ENCODE measurements at regions of chr21 and their contacts with region 1.

Region 1: GRCh38 chr21:17387030-17387617 is 125.7 kb upstream of the CXADR start:
- DNase-seq: peak in 3 of 6 donors; percentile 11 to 43 (median 28)
- ATAC-seq: peak; percentile 64 to 95 (median 88)
- H3K4me3 ChIP-seq: no peak overlapping the region
- H3K27ac ChIP-seq: no peak overlapping the region
- H3K4me1 ChIP-seq: no peaks in the 10 kb centered on the region
- H3K27me3 ChIP-seq: no peaks in the 10 kb centered on the region
- CTCF ChIP-seq: peak; percentile 50 to 85 (median 76)

Region 2: GRCh38 chr21:17554679-17555465 is 167.7 kb after region 1 on chr21:
- intact Hi-C with region 1: loop called in 1 of 3 experiments (anchors 10 kb)
- DNase-seq: no peak
- ATAC-seq: peak in 3 of 4 donors; percentile 68 to 74 (median 73)
- H3K4me3 ChIP-seq: no peak overlapping the region
- H3K27ac ChIP-seq: no peak overlapping the region
- H3K4me1 ChIP-seq: peaks cover 0 to 9% (median 0%) of the 10 kb centered on the region in 3 donors
- H3K27me3 ChIP-seq: no peaks in the 10 kb centered on the region
- CTCF ChIP-seq: no peak

Region 3: GRCh38 chr21:17585875-17586450 is 198.8 kb after region 1 on chr21:
- intact Hi-C with region 1: loop called in 1 of 3 experiments (anchors 10 kb)
- DNase-seq: no peak
- ATAC-seq: peak; percentile 61 to 82 (median 76)
- H3K4me3 ChIP-seq: no peak overlapping the region
- H3K27ac ChIP-seq: no peak overlapping the region
- H3K4me1 ChIP-seq: peaks cover 0 to 8% (median 6%) of the 10 kb centered on the region in 3 donors
- H3K27me3 ChIP-seq: no peaks in the 10 kb centered on the region
- CTCF ChIP-seq: peak in 3 of 4 donors; percentile 42 to 51 (median 43)

Region 4: GRCh38 chr21:17650292-17650691 is 263.2 kb after region 1 on chr21:
- intact Hi-C with region 1: no loop called
- DNase-seq: no peak
- ATAC-seq: no peak
- H3K4me3 ChIP-seq: no peak overlapping the region
- H3K27ac ChIP-seq: no peak overlapping the region
- H3K4me1 ChIP-seq: no peaks in the 10 kb centered on the region
- H3K27me3 ChIP-seq: no peaks in the 10 kb centered on the region
- CTCF ChIP-seq: no peak